Endothelial cell of umbilical vein (primary cell): ENCODE measurements at regions of chr5 and their contacts with region 1.

Region 1: GRCh38 chr5:78841767-78842166 is 143.3 kb downstream of the ARSB start:
- DNase-seq: peak; percentile 80
- H3K4me3 ChIP-seq: no peak overlapping the region
- H3K27ac ChIP-seq: no peak overlapping the region
- H3K4me1 ChIP-seq: peaks cover 18% of the 10 kb centered on the region
- H3K27me3 ChIP-seq: peaks cover 3 to 9% of the 10 kb centered on the region in 2 experiments
- CTCF ChIP-seq: no peak
- POLR2A ChIP-seq: no peak

Region 2: DNA sequence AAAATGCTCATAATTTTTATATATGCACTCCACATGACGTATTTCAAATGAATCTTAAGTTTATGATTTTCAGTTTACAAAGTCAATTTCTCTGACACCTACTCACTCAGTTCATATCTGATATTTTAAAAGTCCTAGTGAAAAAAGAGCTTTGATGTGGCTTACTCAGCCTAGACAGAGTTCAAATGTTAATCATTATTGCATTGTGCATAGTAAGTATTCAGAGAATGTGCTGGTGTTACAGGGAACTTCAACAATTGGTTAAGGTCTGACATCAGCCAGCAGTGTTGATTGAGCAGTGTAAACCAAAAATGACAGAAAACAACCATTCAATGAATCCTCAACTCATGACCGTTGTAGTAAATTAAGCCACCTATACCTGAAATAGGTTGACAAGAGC is 46.0 kb before region 1 on chr5:
- CTCF ChIA-PET with region 1: no interaction called
- POLR2A ChIA-PET with region 1: no interaction called
- dilution Hi-C with region 1: no loop called
- intact Hi-C with region 1: loop called (anchors 2 kb)
- DNase-seq: peak; percentile 30
- H3K4me3 ChIP-seq: no peak overlapping the region
- H3K27ac ChIP-seq: no peak overlapping the region
- H3K4me1 ChIP-seq: no peaks in the 10 kb centered on the region
- H3K27me3 ChIP-seq: no peaks in the 10 kb centered on the region
- CTCF ChIP-seq: no peak
- POLR2A ChIP-seq: no peak